Naive thymus-derived CD4-positive, alpha-beta T cell (primary cell): ENCODE measurements at regions of chr16 and their contacts with region 1.

Region 1: GRCh38 chr16:4766874-4767628 is at the start of gene ZNF500:
- DNase-seq: peak; percentile 90 to 98 (median 92)
- ATAC-seq: peak; percentile 99
- H3K4me3 ChIP-seq: peak within 1 kb of the TSS; percentile 82
- H3K4me3 Mint-ChIP-seq: peak within 1 kb of the TSS; percentile 90 to 94 (median 92)
- H3K27ac ChIP-seq: peak within 1 kb of the TSS; percentile 84
- H3K27ac Mint-ChIP-seq: peak within 1 kb of the TSS; percentile 86 to 96 (median 92)
- H3K4me1 ChIP-seq: peaks cover 17 to 19% of the 10 kb centered on the region in 2 donors
- H3K4me1 Mint-ChIP-seq: peaks cover 24 to 49% (median 34%) of the 10 kb centered on the region in 7 donors
- H3K27me3 ChIP-seq: no peaks in the 10 kb centered on the region
- H3K27me3 Mint-ChIP-seq: no peaks in the 10 kb centered on the region
- total RNA-seq, gene ZNF500: 13.8 to 43.0 (median 24.7) TPM

Region 2: DNA sequence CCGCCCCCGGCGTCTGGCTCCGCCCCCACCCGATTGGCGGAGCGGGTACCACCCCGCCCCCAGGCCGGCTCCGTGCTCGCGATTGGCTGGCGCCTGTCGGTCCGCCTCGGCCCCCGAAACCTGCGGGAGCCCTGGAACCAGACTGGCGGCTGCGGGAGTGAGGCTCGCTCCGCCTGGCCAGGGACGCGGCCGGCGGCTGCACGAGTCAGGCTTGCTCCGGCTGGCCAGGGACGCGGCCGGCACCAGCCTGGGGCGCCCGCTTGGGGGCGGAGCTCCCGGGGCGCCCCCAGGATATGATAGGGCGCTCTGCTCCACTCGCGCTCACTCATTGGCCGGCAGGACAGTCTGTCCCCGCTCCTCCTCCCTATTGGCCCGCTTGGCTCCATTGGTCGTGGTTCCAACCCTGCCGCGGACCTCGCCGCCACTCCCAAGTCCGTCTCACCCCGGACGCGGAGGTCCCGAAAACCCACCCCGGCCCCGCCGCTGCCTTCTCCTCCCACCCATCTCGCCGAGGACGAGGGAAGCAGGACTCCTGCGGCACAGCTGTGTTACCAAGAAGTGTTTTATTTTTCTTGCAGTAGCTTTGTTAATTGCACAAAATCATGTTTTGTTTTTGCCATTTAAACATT is 35.7 kb after region 1 on chr16:
- CTCF ChIA-PET with region 1: interaction called, 3 read pairs
- POLR2A ChIA-PET with region 1: interaction called, 27 read pairs
- intact Hi-C with region 1: loop called (anchors 1 kb)
- DNase-seq: peak; percentile 82 to 97 (median 93)
- ATAC-seq: peak; percentile 93
- H3K4me3 ChIP-seq: peak overlapping the region; percentile 79
- H3K4me3 Mint-ChIP-seq: peak overlapping the region; percentile 81 to 86 (median 86)
- H3K27ac ChIP-seq: peak overlapping the region; percentile 60
- H3K27ac Mint-ChIP-seq: peak overlapping the region in 8 of 9 donors; percentile 36 to 84 (median 74)
- H3K4me1 ChIP-seq: peaks cover 10 to 18% of the 10 kb centered on the region in 2 donors
- H3K4me1 Mint-ChIP-seq: peaks cover 7 to 19% (median 12%) of the 10 kb centered on the region in 7 donors
- H3K27me3 ChIP-seq: no peaks in the 10 kb centered on the region
- H3K27me3 Mint-ChIP-seq: no peaks in the 10 kb centered on the region